Activated CD4-positive, alpha-beta T cell treated with anti-CD3 and anti-CD28 coated beads for 36 hours (primary cell): ENCODE measurements at regions of chr7 and their contacts with region 1.

Region 1: DNA sequence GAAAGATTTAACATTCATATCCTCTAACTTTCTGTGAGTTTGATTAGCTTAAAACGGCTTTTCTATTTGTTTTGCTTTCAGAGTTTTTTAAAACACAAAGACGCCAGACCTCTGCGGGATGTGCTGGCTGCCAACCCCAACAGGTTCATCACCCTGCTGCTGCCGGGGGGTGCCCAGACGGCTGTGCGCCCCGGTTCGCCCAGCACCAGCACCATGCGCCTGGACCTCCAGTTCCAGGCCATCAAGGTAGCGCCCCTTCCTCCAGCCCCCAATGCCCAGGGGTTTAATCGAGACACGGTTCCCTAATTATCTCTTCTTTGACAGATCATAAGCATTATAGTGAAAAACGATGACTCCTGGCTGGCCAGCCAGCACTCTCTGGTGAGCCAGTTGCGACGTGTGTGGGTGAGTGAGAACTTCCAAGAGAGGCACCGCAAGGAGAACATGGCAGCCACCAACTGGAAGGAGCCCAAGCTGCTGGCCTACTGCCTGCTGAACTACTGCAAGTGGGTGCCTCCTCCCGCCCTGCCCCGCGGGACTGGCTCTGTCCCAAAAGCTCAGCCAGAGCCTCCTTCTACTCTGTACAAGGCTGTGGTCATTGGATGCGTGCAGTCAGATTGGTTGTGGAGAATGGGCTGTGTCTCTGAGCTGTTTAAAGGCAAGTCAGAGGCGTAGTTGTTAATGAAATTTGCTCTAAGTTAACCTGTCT is 71.2 kb downstream of the TRRAP start:
- DNase-seq: no peak
- ATAC-seq: no peak
- H3K4me3 Mint-ChIP-seq: no peak overlapping the region
- H3K27ac Mint-ChIP-seq: no peak overlapping the region
- H3K4me1 Mint-ChIP-seq: no peaks in the 10 kb centered on the region
- H3K27me3 Mint-ChIP-seq: no peaks in the 10 kb centered on the region

Region 2: GRCh38 chr7:98907570-98907969 is 41.9 kb before region 1 on chr7:
- CTCF ChIA-PET with region 1: no interaction called
- POLR2A ChIA-PET with region 1: interaction called, 10 read pairs
- intact Hi-C with region 1: no loop called
- DNase-seq: no peak
- ATAC-seq: no peak
- H3K4me3 Mint-ChIP-seq: no peak overlapping the region
- H3K27ac Mint-ChIP-seq: no peak overlapping the region
- H3K4me1 Mint-ChIP-seq: no peaks in the 10 kb centered on the region
- H3K27me3 Mint-ChIP-seq: no peaks in the 10 kb centered on the region